Pancreas (tissue), 10 donors: ENCODE measurements at regions of chr10 and their contacts with region 1.

Region 1: GRCh38 chr10:89829887-89830269 is 128.5 kb downstream of the KIF20B start:
- DNase-seq: no peak
- ATAC-seq: peak in 1 of 4 donors; percentile 66
- H3K4me3 ChIP-seq: no peak overlapping the region
- H3K27ac ChIP-seq: no peak overlapping the region
- H3K4me1 ChIP-seq: no peaks in the 10 kb centered on the region
- H3K27me3 ChIP-seq: no peaks in the 10 kb centered on the region
- CTCF ChIP-seq: no peak

Region 2: DNA sequence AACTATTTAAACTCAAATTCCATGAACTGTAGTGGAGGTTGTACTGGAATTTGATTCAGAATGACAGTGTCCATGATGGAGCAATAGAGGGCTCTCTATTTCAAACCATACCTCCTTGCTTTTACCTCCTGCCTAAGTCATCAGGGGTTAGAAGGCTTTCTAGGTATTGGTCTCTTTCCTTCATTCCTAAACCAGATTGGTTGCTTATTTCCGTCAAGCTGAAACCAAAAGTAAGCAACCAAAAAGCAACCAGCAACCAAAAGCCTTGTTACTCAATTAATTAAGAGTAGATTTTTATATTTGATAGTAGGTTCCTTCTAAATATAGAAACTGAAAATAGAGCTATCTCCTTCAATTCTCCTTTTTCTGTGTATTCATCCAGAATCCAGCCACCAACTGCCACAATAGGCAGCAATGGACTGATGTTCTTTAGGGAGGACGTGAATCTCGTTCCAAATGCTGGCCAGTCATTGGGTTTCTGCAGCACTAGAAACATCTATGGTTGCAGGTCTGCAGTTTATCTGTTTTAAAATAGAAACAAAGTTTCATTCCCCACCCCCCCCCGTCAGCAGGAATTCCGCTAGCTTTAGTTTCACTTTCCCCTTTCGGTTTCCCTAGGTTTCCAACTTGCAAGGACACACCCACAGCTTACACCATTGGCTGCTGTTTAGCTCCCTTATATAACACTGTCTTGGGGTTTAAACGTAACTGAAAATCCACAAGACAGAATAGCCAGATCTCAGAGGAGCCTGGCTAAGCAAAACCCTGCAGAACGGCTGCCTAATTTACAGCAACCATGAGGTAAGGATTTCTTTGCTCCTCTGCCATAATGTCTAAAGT is 437.7 kb before region 1 on chr10 and contains the start of gene IFIT1:
- intact Hi-C with region 1: no loop called
- DNase-seq: peak in 3 of 6 donors; percentile 38 to 70 (median 60)
- ATAC-seq: peak; percentile 92 to 96 (median 96)
- H3K4me3 ChIP-seq: peak within 1 kb of the TSS; percentile 20 to 47 (median 25)
- H3K27ac ChIP-seq: peak within 1 kb of the TSS; percentile 30 to 79 (median 66)
- H3K4me1 ChIP-seq: peaks cover 0 to 18% (median 6%) of the 10 kb centered on the region in 3 donors
- H3K27me3 ChIP-seq: no peaks in the 10 kb centered on the region
- CTCF ChIP-seq: no peak
- total RNA-seq, gene IFIT1: 2.4 to 9.3 (median 3.8) TPM

Region 3: GRCh38 chr10:89814278-89814677 is 15.6 kb before region 1 on chr10:
- intact Hi-C with region 1: loop called in 1 of 3 experiments (anchors 2 kb)
- DNase-seq: no peak
- ATAC-seq: no peak
- H3K4me3 ChIP-seq: no peak overlapping the region
- H3K27ac ChIP-seq: no peak overlapping the region
- H3K4me1 ChIP-seq: no peaks in the 10 kb centered on the region
- H3K27me3 ChIP-seq: no peaks in the 10 kb centered on the region
- CTCF ChIP-seq: no peak